ENCODE measurements at regions of chr6 and their contacts with region 1.

Region 1: GRCh38 chr6:71886184-71887005 is at the start of gene RIMS1:
- DNase-seq: no peak
- H3K4me3 ChIP-seq: peak within 1 kb of the TSS; percentile 63 to 70
- H3K27ac ChIP-seq: no peak within 1 kb of the TSS
- H3K4me1 ChIP-seq: peaks cover 0 to 3% of the 10 kb centered on the region in 2 donors
- H3K27me3 ChIP-seq: no peaks in the 10 kb centered on the region
- CTCF ChIP-seq: no peak
- total RNA-seq, gene RIMS1: not detected

Region 2: DNA sequence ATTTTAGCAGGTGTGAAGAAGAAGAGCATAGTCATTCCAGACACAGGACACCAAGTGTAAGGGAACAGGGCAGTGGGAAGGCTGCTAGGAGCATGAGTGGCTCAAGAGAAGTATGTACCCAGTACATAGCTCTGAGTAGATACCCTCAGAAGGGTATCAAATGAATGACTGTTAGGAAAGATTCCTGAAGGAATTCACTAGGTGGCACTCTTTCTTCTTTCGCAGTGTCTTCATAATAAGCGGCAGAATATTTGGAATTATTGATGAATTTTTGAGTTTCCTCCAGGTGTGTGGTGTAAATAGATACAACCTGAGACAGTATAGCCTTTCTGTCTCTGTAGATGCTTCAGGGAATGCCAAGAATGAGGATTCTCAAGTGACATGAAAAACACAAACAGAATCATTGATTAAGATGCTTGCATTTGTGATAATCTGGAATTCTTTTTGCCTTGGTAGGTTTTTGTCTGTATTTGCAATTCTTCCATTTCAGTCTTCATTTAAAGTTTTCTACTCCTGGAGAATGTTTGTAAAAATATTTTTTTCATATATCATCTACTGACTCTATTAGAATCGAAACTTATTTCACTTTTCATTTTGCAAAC is 264.4 kb before region 1 on chr6:
- intact Hi-C with region 1: loop called (anchors 5 kb)
- DNase-seq: no peak
- H3K4me3 ChIP-seq: no peak overlapping the region
- H3K27ac ChIP-seq: no peak overlapping the region
- H3K4me1 ChIP-seq: no peaks in the 10 kb centered on the region
- H3K27me3 ChIP-seq: no peaks in the 10 kb centered on the region
- CTCF ChIP-seq: peak in 2 of 3 experiments; percentile 40 to 54

Region 3: DNA sequence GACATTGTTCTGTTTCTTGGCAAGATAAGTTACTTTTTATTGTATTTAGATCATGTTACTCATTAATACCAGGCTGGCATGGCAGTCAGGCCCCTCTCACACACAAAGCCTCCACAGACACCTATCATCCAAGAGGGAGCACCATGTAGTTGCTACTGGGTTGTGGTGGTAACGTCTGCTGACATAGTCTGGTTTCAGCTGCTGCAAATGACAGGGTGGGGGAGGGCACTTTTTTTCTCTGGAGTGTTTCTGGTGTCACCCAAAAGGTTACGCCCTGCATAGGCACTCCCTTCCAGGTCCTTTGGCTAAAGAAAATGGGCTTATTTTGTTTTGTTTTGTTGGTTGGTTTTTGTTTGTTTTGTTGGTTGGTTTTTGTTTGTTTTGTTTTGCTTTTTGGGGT is 236.5 kb before region 1 on chr6:
- intact Hi-C with region 1: no loop called
- DNase-seq: no peak
- H3K4me3 ChIP-seq: no peak overlapping the region
- H3K27ac ChIP-seq: no peak overlapping the region
- H3K4me1 ChIP-seq: no peaks in the 10 kb centered on the region
- H3K27me3 ChIP-seq: no peaks in the 10 kb centered on the region
- CTCF ChIP-seq: no peak

Measured in ascending aorta (tissue), 2 donors.